IMR-90 (cell line): ENCODE measurements at regions of chr1 and their contacts with region 1.

Region 1: DNA sequence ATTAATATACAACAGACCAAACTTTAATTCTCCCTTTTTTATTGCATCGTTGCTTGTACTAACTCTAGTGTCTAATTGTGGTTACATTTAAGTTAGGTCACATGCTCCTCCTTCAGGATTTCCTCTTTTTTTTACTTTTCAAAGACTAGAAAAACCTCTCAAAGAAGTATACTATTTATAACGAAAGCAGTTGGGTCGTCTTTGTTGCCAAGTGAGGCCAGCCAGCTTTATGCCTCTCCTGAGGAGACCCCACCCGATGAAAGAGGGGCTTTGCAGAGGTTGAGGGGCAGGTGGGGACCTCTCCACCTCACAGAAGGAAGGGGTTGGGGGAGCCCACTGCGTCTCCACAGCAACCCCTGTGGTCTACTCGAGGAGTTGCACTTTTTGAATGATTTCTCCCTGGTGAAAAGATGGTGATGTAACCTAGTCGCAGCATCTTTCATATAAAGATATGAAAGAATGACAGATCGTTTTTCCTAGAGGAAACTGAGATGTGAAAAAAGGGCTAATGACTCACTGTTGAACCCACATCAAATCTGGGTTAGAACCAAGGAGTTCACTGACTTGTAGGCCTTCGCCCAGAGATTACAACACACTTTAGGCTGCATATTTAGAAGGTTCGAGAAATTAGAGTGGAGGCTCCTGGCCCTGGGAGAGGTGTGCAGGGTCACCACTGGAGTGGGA is 6.4 kb downstream of the TGFB2 start:
- DNase-seq: peak; percentile 66
- ATAC-seq: peak; percentile 44
- H3K4me3 ChIP-seq: peak overlapping the region; percentile 61
- H3K27ac ChIP-seq: peak overlapping the region; percentile 95
- H3K4me1 ChIP-seq: peaks cover 6% of the 10 kb centered on the region
- H3K27me3 ChIP-seq: no peaks in the 10 kb centered on the region
- CTCF ChIP-seq: peak; percentile 59
- POLR2A ChIP-seq: no peak
- RAD21 ChIP-seq: no peak

Region 2: GRCh38 chr1:218299416-218299815 is 52.1 kb before region 1 on chr1:
- CTCF ChIA-PET with region 1: no interaction called
- POLR2A ChIA-PET with region 1: no interaction called
- dilution Hi-C with region 1: no loop called
- in situ Hi-C with region 1: no loop called
- intact Hi-C with region 1: no loop called
- DNase-seq: peak; percentile 77
- ATAC-seq: peak; percentile 89
- H3K4me3 ChIP-seq: no peak overlapping the region
- H3K27ac ChIP-seq: no peak overlapping the region
- H3K4me1 ChIP-seq: 0 out of 2 replicates have a peak, but pooled peaks cover 1% of the 10 kb centered on the region
- H3K27me3 ChIP-seq: no peaks in the 10 kb centered on the region
- CTCF ChIP-seq: peak; percentile 65
- POLR2A ChIP-seq: no peak
- RAD21 ChIP-seq: peak; percentile 68

Region 3: DNA sequence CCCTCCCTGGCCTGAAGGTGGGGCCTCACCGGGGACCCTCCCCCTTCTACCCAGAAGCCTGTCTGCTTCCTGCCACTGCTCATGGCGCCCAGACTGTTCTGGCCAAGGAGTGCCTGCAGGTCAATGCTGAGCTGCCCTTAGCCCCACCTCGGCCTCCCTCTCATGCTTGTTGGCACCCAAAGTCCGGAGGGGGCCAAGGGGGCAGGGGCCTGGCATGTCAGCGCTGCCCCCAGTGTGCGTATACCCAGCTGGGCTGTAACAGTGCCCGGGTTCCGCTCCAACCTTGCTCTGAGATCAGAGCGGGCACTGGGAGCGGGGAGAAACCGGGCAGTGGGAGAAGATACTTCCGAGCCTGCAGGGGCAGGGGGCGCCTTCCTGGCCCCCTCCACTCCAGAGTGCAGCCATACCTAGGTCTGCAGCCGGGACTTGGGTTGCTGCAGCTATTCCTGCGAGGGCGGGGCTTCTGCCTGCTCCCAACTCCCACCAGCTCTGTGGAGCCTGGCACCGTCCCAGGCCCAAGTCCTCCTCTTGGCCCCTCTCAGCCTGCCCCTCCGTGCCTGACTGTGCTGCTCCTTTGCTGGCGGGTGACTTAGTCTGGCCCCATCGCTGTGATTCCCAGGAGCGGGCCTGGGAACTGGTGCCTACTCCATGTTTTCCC is 27.8 kb before region 1 on chr1:
- CTCF ChIA-PET with region 1: no interaction called
- POLR2A ChIA-PET with region 1: no interaction called
- dilution Hi-C with region 1: no loop called
- in situ Hi-C with region 1: no loop called
- intact Hi-C with region 1: no loop called
- DNase-seq: no peak
- ATAC-seq: no peak
- H3K4me3 ChIP-seq: no peak overlapping the region
- H3K27ac ChIP-seq: no peak overlapping the region
- H3K4me1 ChIP-seq: peaks cover 2% of the 10 kb centered on the region; the same call in 1 of the 2 replicates
- H3K27me3 ChIP-seq: no peaks in the 10 kb centered on the region
- CTCF ChIP-seq: no peak
- POLR2A ChIP-seq: no peak
- RAD21 ChIP-seq: no peak

Region 4: DNA sequence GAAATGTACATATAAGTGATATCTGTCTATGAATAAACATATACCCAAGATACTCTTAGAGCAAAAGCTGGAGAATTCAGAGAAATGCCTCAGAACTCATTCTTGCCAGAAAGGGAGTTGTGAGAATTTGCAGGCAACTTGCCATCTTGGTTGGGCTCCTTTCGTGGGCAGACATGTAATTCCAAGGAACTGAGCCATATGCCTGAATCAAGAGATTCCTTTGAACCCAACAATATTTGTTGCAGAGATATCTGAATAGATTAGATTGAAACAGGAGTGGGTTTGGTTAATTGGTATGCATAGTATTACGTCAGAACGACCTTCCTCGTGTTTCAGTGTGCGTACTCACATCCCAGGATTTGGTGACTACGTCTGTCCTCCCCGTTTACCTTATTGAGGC is 60.6 kb after region 1 on chr1:
- CTCF ChIA-PET with region 1: no interaction called
- POLR2A ChIA-PET with region 1: no interaction called
- dilution Hi-C with region 1: no loop called
- in situ Hi-C with region 1: no loop called
- intact Hi-C with region 1: no loop called
- DNase-seq: peak; percentile 68
- ATAC-seq: peak; percentile 24; the same call in 1 of the 2 replicates
- H3K4me3 ChIP-seq: no peak overlapping the region
- H3K27ac ChIP-seq: no peak overlapping the region
- H3K4me1 ChIP-seq: peaks cover 1% of the 10 kb centered on the region; the same call in 1 of the 2 replicates
- H3K27me3 ChIP-seq: no peaks in the 10 kb centered on the region
- CTCF ChIP-seq: no peak
- POLR2A ChIP-seq: no peak
- RAD21 ChIP-seq: no peak

Region 5: GRCh38 chr1:218480137-218480536 is 128.6 kb after region 1 on chr1:
- CTCF ChIA-PET with region 1: no interaction called
- POLR2A ChIA-PET with region 1: interaction called, 4 read pairs
- dilution Hi-C with region 1: no loop called
- in situ Hi-C with region 1: no loop called
- intact Hi-C with region 1: loop called (anchors 2 kb)
- DNase-seq: peak; percentile 97
- ATAC-seq: peak; percentile 64
- H3K4me3 ChIP-seq: no peak overlapping the region
- H3K27ac ChIP-seq: peak overlapping the region; percentile 78
- H3K4me1 ChIP-seq: peaks cover 16% of the 10 kb centered on the region
- H3K27me3 ChIP-seq: no peaks in the 10 kb centered on the region
- CTCF ChIP-seq: no peak
- POLR2A ChIP-seq: peak; percentile 45; the same call in 1 of the 2 replicates
- RAD21 ChIP-seq: no peak